Heart left ventricle (tissue), 16 donors: ENCODE measurements at regions of chr2 and their contacts with region 1.

Region 1: GRCh38 chr2:96536445-96537065 is at the start of gene ARID5A:
- DNase-seq: peak; percentile 95 to 98 (median 96)
- ATAC-seq: peak; percentile 69 to 82 (median 77)
- H3K4me3 ChIP-seq: peak within 1 kb of the TSS; percentile 84 to 99 (median 97)
- H3K27ac ChIP-seq: peak within 1 kb of the TSS; percentile 85 to 100 (median 98)
- H3K4me1 ChIP-seq: peaks cover 22 to 88% (median 74%) of the 10 kb centered on the region in 12 donors
- H3K27me3 ChIP-seq: no peaks in the 10 kb centered on the region
- CTCF ChIP-seq: peak in 10 of 12 donors; percentile 25 to 60 (median 42)
- POLR2A ChIP-seq: peak; percentile 99 to 100
- total RNA-seq, gene ARID5A: 13.3 to 50.2 (median 28.2) TPM

Region 2: DNA sequence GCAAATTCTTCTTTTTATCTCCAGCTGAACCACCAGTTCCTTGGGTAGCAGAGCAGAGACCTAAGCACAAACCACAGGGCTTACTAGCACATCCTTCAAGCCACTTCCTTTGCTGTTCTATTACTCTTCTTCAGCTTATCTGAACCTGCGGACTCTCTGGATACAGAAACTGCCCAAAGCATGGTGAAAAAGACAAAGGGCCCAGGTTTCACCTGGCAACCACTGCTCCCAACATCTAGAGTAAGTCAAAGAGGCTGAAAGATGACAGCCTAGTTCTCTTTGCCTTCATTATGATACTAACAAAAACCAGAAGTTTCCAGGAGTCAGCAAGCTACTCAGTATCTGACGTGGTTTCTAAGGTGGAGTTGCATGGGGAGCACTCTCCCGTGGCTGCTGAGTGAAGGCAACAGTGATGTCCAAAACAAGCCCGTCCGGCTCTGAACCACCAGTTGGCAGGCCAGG is 58.2 kb after region 1 on chr2:
- intact Hi-C with region 1: no loop called
- DNase-seq: no peak
- ATAC-seq: no peak
- H3K4me3 ChIP-seq: no peak overlapping the region
- H3K27ac ChIP-seq: peak overlapping the region in 1 of 12 donors; percentile 57
- H3K4me1 ChIP-seq: peaks cover 0 to 18% (median 7%) of the 10 kb centered on the region in 12 donors
- H3K27me3 ChIP-seq: no peaks in the 10 kb centered on the region
- CTCF ChIP-seq: no peak
- POLR2A ChIP-seq: no peak

Region 3: DNA sequence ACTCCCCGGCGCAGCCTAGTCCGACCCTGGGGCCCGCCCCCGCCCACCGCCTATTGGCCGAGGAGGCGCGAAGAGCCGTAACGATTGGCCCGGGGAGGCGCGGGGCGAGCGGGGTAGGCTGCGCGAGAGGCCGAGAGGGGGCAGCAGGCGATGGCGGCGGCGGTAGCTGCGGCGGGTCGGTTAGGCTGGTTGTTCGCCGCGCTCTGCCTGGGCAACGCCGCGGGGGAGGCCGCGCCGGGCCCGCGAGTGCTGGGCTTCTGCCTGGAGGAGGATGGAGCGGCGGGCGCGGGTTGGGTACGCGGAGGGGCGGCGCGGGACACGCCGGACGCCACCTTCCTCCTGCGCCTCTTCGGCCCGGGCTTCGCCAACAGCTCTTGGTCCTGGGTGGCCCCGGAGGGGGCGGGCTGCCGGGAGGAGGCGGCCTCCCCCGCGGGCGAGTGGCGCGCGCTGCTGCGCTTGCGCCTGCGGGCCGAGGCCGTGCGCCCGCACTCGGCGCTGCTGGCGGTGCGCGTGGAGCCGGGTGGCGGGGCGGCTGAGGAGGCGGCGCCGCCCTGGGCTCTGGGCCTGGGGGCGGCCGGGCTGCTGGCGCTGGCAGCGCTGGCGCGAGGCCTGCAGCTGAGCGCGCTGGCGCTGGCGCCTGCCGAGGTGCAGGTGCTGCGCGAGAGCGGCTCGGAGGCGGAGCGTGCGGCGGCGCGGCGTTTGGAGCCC is 279.7 kb after region 1 on chr2 and contains the start of gene CNNM3:
- intact Hi-C with region 1: loop called in 1 of 10 experiments (anchors 10 kb)
- DNase-seq: peak; percentile 97 to 99 (median 98)
- ATAC-seq: peak; percentile 91 to 95 (median 94)
- H3K4me3 ChIP-seq: peak within 1 kb of the TSS; percentile 61 to 98 (median 82)
- H3K27ac ChIP-seq: peak within 1 kb of the TSS; percentile 90 to 99 (median 97)
- H3K4me1 ChIP-seq: peaks cover 3 to 70% (median 60%) of the 10 kb centered on the region in 12 donors
- H3K27me3 ChIP-seq: no peaks in the 10 kb centered on the region
- CTCF ChIP-seq: peak; percentile 56 to 91 (median 72)
- POLR2A ChIP-seq: peak in 1 of 2 donors; percentile 90
- total RNA-seq, gene CNNM3: 6.6 to 17.7 (median 10.6) TPM

Region 4: DNA sequence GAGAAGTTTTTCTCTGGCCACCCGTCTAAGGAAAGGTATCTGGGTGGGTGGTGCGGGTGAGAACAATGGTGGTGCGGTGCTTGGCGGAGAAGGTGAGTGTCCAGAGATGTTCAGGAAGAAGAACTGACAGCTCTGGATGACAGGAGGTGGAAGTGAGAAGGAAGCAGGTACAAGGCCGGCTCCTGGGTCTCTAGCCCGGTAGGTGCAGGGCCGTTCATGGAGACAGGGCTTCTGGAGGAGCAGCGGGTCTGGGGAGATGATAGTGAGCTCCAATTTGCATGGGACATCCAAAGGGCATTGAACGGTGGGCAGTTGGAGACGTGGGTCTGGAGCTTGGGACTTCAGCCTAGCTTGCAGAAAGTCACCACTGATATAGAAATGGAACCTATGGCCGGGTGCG is 559.1 kb after region 1 on chr2:
- intact Hi-C with region 1: no loop called
- DNase-seq: no peak
- ATAC-seq: no peak
- H3K4me3 ChIP-seq: peak overlapping the region in 5 of 12 donors; percentile 48 to 62 (median 56)
- H3K27ac ChIP-seq: peak overlapping the region in 2 of 12 donors; percentile 68 to 77
- H3K4me1 ChIP-seq: peaks cover 0 to 9% (median 6%) of the 10 kb centered on the region in 12 donors
- H3K27me3 ChIP-seq: no peaks in the 10 kb centered on the region
- CTCF ChIP-seq: no peak
- POLR2A ChIP-seq: no peak